Ascending aorta (tissue), 2 donors: ENCODE measurements at regions of chr7 and their contacts with region 1.

Region 1: DNA sequence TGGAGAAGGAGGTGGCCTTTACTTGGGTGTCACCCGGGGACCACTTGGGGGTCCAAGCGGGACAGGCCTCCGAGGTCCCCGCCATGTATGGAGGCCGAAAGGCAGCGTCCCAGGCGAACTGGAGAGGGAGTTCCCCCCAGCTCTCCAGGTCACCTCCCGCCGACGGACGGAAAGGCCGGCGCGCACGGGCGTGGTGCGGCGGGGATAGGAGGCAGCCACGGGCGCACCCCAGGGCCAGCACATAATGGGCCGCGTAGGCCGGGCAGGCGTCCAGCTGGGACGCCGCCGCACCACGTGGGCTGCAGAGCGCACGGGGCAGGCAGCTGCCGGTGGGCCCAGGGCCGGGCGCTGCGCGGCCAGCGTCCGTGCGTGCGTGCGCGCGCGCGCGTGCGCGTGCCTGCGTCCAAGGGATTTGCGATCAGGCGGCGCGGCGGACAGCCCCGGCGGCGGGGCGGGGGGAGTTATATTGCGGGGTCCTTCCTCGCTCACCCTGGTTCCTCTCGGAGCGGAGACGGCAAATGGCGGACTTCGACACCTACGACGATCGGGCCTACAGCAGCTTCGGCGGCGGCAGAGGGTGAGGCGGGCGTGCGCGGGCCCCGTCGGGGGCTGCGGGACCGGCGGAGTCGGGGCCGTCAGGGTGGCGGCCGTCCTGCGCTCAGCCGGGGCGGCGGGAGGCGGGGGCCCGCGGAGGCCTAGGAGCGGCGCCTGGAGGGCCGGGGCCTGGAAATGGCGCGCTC is at the start of gene EIF4H:
- DNase-seq: peak; percentile 77 to 97
- H3K4me3 ChIP-seq: peak within 1 kb of the TSS; percentile 70 to 99
- H3K27ac ChIP-seq: peak within 1 kb of the TSS; percentile 87 to 90
- H3K4me1 ChIP-seq: peaks cover 17 to 46% of the 10 kb centered on the region in 2 donors
- H3K27me3 ChIP-seq: no peaks in the 10 kb centered on the region
- CTCF ChIP-seq: no peak
- total RNA-seq, gene EIF4H: 150 TPM

Region 2: DNA sequence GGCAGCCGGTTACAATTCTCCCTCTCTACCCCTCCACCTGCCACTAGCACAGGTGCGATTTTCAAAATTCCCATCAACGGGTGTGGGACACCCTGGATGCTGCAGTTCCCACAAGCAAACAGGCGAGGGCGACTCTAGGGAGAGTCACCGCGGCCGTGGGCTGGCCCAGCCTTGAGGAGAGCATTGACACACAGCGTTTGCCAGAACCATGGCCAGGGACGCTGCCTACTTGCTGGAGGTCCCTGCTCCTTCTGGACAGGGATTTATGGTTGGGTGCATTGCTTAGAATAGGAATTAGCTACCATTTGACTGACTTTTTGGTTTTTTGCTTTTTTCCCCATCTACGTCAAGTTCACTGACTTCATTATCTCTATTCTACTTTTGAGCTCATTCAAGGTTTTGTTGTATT is 362.3 kb before region 1 on chr7:
- intact Hi-C with region 1: no loop called
- DNase-seq: peak in 1 of 2 donors; percentile 80
- H3K4me3 ChIP-seq: no peak overlapping the region
- H3K27ac ChIP-seq: no peak overlapping the region
- H3K4me1 ChIP-seq: no peaks in the 10 kb centered on the region
- H3K27me3 ChIP-seq: no peaks in the 10 kb centered on the region
- CTCF ChIP-seq: peak; percentile 80 to 92 (median 82)

Region 3: GRCh38 chr7:74083928-74084721 is 89.9 kb before region 1 on chr7:
- intact Hi-C with region 1: loop called (anchors 2 kb)
- DNase-seq: no peak
- H3K4me3 ChIP-seq: peak overlapping the region; percentile 81 to 94
- H3K27ac ChIP-seq: peak overlapping the region in 1 of 2 donors; percentile 62
- H3K4me1 ChIP-seq: peaks cover 6 to 15% of the 10 kb centered on the region in 2 donors
- H3K27me3 ChIP-seq: no peaks in the 10 kb centered on the region
- CTCF ChIP-seq: no peak